PC-3 (cell line): ENCODE measurements at regions of chr2 and their contacts with region 1.

Region 1: DNA sequence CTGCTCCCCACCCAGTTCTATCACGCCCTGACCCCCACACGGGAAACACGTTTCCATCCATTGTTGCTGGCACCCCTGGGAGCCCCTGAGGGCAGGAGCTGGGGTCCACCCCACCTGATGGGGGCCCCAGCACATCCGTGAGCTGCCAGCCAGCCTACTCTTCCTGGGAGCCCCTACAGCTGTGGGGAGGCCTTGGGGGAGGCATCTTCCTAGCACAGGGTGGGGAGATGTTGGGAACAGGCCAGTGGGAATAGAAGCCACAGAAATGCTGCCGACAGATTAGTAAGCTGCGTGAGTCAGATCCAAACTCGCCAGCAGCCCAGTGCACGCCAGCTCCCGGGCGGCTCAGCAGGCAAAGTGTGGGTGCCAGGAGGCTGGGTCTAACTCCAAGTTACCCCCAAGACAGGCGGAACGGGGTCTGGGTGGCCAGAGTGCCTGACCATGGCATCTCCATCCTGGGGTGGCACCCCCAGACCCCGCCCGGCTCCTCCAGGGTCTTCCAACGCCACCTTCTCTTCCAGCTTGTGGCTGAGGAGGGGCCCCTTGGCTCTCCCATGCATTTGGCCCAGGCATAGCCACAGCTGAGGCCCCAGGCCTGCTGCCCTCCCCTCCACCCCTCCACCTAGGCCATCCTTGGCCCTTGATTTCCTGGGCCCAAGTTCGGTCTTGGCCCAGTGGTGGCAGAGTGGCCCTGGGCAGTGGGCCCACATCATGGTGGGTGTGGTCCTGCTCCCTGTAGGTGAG is 15.3 kb downstream of the CROCC2 start:
- DNase-seq: peak; percentile 71
- ATAC-seq: peak; percentile 86
- H3K4me3 ChIP-seq: no peak overlapping the region
- H3K27ac ChIP-seq: no peak overlapping the region; the same call in 1 of the 2 replicates
- H3K4me1 ChIP-seq: peaks cover 12% of the 10 kb centered on the region
- H3K27me3 ChIP-seq: no peaks in the 10 kb centered on the region
- CTCF ChIP-seq: no peak

Region 2: DNA sequence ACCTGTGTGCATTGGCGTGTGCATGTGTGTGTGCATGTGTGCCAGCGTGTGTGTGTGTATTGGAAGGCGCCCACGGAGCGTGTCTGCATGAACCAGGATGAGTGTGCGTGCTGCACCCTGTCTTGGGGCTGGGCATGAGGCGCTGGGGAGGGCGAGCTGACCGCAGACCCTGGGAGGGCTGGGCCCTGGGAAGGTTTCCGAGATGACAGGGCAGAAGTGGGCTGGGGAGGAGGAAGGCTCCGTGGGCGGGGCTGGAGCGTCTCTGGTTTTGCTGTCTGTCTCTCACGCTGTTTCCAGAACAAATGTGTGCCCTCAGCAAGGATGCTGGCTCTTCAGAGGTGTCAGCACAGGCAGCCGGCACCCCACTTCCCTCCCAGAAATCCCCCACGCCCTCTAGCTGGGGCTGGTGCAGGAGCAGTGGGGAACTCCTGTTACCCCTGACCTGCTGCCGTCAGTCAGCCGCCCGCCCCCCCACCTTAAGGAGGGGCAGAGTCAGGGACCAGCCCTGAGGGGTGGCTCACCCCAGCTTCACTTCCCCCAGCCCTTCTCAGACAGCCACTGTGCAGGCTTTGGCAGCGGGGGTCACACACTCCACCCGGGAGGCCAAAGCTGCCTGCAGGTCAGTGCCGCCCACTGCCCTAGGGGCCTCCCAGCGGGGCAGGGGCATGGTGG is 296.3 kb before region 1 on chr2 and contains the start of gene GPR35:
- CTCF ChIA-PET with region 1: no interaction called
- POLR2A ChIA-PET with region 1: no interaction called
- intact Hi-C with region 1: no loop called
- DNase-seq: no peak
- ATAC-seq: no peak
- H3K4me3 ChIP-seq: no peak within 1 kb of the TSS
- H3K27ac ChIP-seq: no peak within 1 kb of the TSS
- H3K4me1 ChIP-seq: no peaks in the 10 kb centered on the region
- H3K27me3 ChIP-seq: no peaks in the 10 kb centered on the region
- CTCF ChIP-seq: no peak
- total RNA-seq, gene GPR35: 2.4 and 5.2 TPM in 2 replicates

Region 3: GRCh38 chr2:240873805-240874714 is 47.4 kb before region 1 on chr2:
- CTCF ChIA-PET with region 1: no interaction called
- POLR2A ChIA-PET with region 1: no interaction called
- intact Hi-C with region 1: no loop called
- DNase-seq: no peak
- ATAC-seq: no peak
- H3K4me3 ChIP-seq: no peak overlapping the region
- H3K27ac ChIP-seq: no peak overlapping the region
- H3K4me1 ChIP-seq: no peaks in the 10 kb centered on the region
- H3K27me3 ChIP-seq: no peaks in the 10 kb centered on the region; the same call in none of the 2 replicates
- CTCF ChIP-seq: no peak

Region 4: DNA sequence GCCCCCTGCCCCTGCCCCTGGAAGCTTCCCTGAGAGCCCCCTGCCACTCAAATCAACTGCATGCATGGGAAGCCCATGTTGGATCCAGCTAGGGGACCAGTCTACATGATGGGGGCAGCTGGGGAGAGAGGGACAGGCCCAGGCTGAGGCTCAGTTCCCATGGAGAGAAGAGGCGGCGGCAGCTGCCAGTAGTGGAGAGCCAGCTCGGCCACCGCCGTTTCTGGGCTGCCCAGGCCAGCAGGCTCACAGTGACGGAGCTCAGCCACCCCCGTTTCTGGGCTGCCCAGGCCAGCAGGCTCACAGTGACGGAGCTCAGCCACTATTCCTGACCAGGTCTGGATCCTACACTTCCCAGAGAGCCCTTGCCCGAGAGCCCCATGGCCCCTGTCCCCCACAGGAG is 29.1 kb before region 1 on chr2:
- CTCF ChIA-PET with region 1: no interaction called
- POLR2A ChIA-PET with region 1: interaction called, 10 read pairs
- intact Hi-C with region 1: no loop called
- DNase-seq: no peak
- ATAC-seq: no peak
- H3K4me3 ChIP-seq: no peak overlapping the region
- H3K27ac ChIP-seq: no peak overlapping the region
- H3K4me1 ChIP-seq: peaks cover 15% of the 10 kb centered on the region
- H3K27me3 ChIP-seq: no peaks in the 10 kb centered on the region
- CTCF ChIP-seq: no peak